Activated B cell treated with CpG ODN at 0.5 μM for 24 hours (primary cell): ENCODE measurements at regions of chr11 and their contacts with region 1.

Region 1: DNA sequence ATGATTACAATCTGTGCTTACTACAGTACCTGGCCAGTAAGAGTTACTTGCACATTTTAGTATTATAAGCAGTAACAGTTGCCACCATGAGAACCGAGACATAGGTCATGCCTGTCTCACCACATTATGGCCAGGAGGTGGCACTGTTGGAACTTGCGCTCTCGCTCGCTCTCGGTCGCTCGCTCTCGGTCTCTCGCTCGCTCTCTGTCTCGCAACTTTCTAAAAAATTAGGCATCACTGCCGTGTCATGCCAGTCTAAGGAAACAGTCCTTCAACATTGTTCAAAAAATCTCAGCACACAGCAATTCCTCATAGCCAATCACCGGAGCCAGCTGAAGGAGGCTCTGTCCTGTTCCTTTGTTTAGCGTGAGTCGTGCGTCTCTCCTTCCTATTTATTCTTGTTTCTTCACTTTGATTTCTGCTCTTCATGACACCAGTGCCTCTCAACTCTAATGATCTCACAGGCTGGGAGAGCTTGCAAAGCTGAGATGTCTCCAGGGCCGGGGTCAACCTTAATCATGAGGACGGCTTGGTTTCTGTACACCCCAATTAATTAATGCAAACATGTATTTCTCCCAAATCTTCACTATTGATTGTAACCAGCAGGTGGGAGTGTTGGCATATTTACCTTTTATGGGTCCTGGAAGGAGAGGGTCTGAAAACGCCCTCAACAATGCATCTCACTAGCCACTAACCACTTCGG is 6.3 kb upstream of the ADAMTS8 start:
- DNase-seq: peak; percentile 39
- ATAC-seq: peak; percentile 84
- H3K4me3 Mint-ChIP-seq: no peak overlapping the region
- H3K27ac Mint-ChIP-seq: no peak overlapping the region
- H3K4me1 Mint-ChIP-seq: peaks cover 8% of the 10 kb centered on the region
- H3K27me3 Mint-ChIP-seq: peaks cover 32% of the 10 kb centered on the region
- CTCF ChIP-seq: peak; percentile 87

Region 2: GRCh38 chr11:129922674-129923073 is 512.0 kb before region 1 on chr11:
- CTCF ChIA-PET with region 1: no interaction called
- POLR2A ChIA-PET with region 1: no interaction called
- intact Hi-C with region 1: loop called (anchors 5 kb)
- DNase-seq: no peak
- ATAC-seq: no peak
- H3K4me3 Mint-ChIP-seq: no peak overlapping the region
- H3K27ac Mint-ChIP-seq: no peak overlapping the region
- H3K4me1 Mint-ChIP-seq: peaks cover 4% of the 10 kb centered on the region
- H3K27me3 Mint-ChIP-seq: no peaks in the 10 kb centered on the region
- CTCF ChIP-seq: no peak

Region 3: GRCh38 chr11:130213143-130213978 is 221.3 kb before region 1 on chr11:
- CTCF ChIA-PET with region 1: interaction called, 29 read pairs
- POLR2A ChIA-PET with region 1: no interaction called
- intact Hi-C with region 1: loop called (anchors 1 kb)
- DNase-seq: peak; percentile 77
- ATAC-seq: peak; percentile 99
- H3K4me3 Mint-ChIP-seq: no peak overlapping the region
- H3K27ac Mint-ChIP-seq: no peak overlapping the region
- H3K4me1 Mint-ChIP-seq: peaks cover 6% of the 10 kb centered on the region
- H3K27me3 Mint-ChIP-seq: no peaks in the 10 kb centered on the region
- CTCF ChIP-seq: peak; percentile 73

Region 4: GRCh38 chr11:130894322-130895025 is 459.8 kb after region 1 on chr11:
- CTCF ChIA-PET with region 1: interaction called, 43 read pairs
- POLR2A ChIA-PET with region 1: no interaction called
- intact Hi-C with region 1: loop called (anchors 1 kb)
- DNase-seq: peak; percentile 38
- ATAC-seq: peak; percentile 84
- H3K4me3 Mint-ChIP-seq: no peak overlapping the region
- H3K27ac Mint-ChIP-seq: no peak overlapping the region
- H3K4me1 Mint-ChIP-seq: no peaks in the 10 kb centered on the region
- H3K27me3 Mint-ChIP-seq: no peaks in the 10 kb centered on the region
- CTCF ChIP-seq: peak; percentile 61